Ovary (tissue), 10 donors: ENCODE measurements at regions of chr15 and their contacts with region 1.

Region 1: GRCh38 chr15:85750319-85750806 is 44.4 kb downstream of the KLHL25 start:
- DNase-seq: peak; percentile 74 to 84 (median 79)
- H3K4me3 ChIP-seq: peak overlapping the region; percentile 5
- H3K27ac ChIP-seq: peak overlapping the region; percentile 42 to 53
- H3K4me1 ChIP-seq: peaks cover 15% of the 10 kb centered on the region
- H3K27me3 ChIP-seq: no peaks in the 10 kb centered on the region
- CTCF ChIP-seq: no peak
- EP300 ChIP-seq: no peak
- POLR2A ChIP-seq: no peak

Region 2: DNA sequence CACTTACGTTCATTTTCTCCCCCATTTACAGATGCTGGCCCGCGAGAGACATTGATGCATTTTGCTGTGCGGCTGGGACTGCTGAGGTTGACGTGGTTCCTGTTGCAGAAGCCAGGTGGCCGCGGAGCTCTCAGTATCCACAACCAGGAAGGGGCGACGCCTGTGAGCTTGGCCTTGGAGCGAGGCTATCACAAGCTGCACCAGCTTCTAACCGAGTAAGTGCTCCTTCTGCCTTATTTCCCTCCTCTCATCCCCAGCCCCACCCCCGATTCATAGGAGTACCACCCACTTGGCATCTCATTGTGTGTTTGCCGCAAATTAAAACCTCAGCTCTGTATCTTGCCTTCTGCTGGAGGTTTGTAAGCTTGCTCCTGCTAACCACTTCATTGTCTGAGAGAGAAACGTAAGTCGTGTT is 206.6 kb before region 1 on chr15:
- intact Hi-C with region 1: no loop called
- DNase-seq: peak; percentile 66 to 77 (median 73)
- H3K4me3 ChIP-seq: no peak overlapping the region
- H3K27ac ChIP-seq: no peak overlapping the region
- H3K4me1 ChIP-seq: no peaks in the 10 kb centered on the region
- H3K27me3 ChIP-seq: no peaks in the 10 kb centered on the region
- CTCF ChIP-seq: peak; percentile 20 to 49 (median 27)
- EP300 ChIP-seq: no peak
- POLR2A ChIP-seq: no peak

Region 3: DNA sequence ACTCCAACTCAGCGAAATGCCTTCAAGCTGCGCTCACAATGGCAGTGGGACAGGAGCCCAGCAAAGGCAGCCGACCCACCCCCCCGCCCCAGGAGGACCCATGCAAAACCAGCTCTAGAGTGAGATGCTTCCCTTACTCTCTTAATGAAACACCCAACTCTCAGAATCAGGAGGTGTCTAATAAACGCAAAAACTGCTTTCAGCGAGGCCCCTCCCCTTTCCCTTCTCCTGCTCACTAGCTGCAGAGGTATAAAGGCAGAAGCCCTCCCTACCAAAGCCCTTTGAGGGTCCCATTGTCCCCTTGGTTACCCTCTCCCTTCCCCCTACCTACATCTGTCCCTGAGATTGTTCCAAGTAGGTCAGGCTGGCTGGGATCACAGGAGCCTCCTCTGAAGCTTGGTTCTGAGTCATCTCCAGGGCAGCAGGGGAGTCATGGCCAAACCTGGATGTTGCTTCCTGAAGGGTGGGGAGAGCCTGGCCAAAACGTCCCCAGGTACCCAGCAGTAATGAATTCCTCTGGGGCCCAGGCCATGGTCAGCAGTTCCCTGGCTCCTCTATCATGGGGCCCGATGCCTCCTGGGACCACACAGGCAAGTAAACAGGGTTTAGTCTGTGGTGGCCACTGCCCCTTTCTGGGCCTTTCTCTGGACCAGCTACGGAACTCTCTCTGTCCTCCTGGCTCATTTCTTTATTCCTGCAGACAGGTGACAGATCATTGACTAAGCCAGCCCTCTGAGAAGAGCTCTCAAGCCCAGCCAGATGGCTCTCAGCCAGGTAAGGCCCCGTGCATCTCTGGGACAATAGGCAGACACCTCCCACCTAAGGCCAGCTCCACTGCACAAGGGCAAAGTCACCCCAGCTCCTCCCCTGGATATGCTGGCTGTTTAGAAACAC is 35.8 kb after region 1 on chr15:
- intact Hi-C with region 1: loop called in 2 of 4 experiments (anchors 5 kb)
- DNase-seq: peak in 3 of 5 donors; percentile 44 to 54 (median 46)
- H3K4me3 ChIP-seq: no peak overlapping the region
- H3K27ac ChIP-seq: no peak overlapping the region
- H3K4me1 ChIP-seq: peaks cover 14% of the 10 kb centered on the region
- H3K27me3 ChIP-seq: no peaks in the 10 kb centered on the region
- CTCF ChIP-seq: no peak
- EP300 ChIP-seq: no peak
- POLR2A ChIP-seq: no peak

Region 4: DNA sequence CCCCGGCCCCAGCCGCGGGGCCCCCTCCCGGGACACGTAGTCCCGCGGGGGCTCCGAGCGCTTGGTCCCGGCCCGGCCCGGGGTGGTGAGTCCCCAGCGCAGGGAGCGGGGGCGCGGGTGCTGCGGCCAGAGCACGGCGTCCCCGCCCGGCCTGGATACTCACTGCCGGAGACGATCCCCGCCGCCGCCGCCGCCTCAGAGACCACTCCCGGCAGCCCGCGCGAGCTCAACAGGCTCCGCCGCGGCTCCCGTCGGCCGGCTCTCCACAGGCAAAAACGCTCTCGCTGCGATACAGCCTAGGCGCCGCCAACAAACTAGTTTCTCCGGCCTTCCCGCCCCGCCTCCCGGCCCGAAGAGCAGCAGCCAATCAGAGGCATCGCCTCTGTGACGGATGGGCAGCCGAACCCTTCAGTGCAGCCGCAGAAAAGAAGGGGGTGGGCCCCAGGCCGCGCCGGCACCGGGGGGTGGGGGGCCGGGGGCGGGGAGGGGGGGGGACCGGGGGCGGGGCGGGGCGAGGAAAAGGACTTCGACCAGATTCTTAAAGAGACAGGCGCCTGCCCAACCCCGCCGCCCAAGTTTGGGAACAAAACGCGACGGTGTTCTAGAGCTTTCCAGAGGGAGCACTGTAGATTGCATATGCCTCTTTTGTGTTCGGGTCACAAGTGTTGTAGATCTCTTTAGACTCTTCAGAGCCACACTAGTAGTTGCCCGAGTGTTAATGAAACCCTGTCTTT is 44.4 kb after region 1 on chr15 and contains the start of gene KLHL25:
- intact Hi-C with region 1: loop called in 2 of 4 experiments (anchors 5 kb)
- DNase-seq: peak; percentile 93 to 95 (median 94)
- H3K4me3 ChIP-seq: peak within 1 kb of the TSS; percentile 96
- H3K27ac ChIP-seq: peak within 1 kb of the TSS; percentile 47 to 85
- H3K4me1 ChIP-seq: peaks cover 5% of the 10 kb centered on the region
- H3K27me3 ChIP-seq: no peaks in the 10 kb centered on the region
- CTCF ChIP-seq: peak in 1 of 3 donors; percentile 13
- EP300 ChIP-seq: no peak
- POLR2A ChIP-seq: peak; percentile 71
- total RNA-seq, gene KLHL25: 5.3 to 9.6 (median 7.1) TPM

Region 5: DNA sequence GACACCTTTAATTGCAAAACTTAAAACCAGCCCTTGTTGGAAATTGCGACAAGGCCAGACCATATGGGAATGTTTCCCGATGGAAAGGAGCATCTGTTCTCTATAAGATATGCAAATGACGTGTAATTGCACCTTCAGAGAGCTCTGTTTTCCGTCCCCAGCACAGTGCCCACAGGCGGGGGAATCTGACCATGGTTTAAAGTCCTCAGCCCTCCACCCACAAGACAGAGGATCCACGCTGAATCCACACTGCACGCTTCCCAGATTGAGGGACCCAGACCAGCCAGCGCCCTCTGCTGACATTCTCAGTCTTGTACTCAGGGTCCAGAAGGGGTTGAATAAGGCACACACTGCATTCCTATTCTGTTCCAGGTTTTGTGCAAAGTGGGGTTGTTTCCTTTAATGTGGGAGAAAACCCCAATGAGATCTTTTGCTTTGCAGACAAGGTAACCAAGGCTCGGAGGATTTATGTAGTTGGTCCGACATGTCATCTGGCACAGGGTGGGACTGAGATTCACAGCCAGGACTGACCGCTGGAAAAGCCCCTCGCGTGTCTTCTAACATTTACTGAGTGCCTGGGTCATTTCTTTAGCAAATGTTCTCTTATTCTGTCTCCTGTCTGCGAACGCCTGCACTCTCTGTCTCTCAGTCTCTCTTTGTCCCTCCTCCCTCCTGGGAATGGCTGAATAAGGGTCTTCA is 81.2 kb after region 1 on chr15:
- intact Hi-C with region 1: loop called in 1 of 4 experiments (anchors 5 kb)
- DNase-seq: peak; percentile 69 to 82 (median 77)
- H3K4me3 ChIP-seq: no peak overlapping the region
- H3K27ac ChIP-seq: no peak overlapping the region
- H3K4me1 ChIP-seq: no peaks in the 10 kb centered on the region
- H3K27me3 ChIP-seq: no peaks in the 10 kb centered on the region
- CTCF ChIP-seq: peak; percentile 49 to 75 (median 52)
- EP300 ChIP-seq: no peak
- POLR2A ChIP-seq: no peak

Region 6: DNA sequence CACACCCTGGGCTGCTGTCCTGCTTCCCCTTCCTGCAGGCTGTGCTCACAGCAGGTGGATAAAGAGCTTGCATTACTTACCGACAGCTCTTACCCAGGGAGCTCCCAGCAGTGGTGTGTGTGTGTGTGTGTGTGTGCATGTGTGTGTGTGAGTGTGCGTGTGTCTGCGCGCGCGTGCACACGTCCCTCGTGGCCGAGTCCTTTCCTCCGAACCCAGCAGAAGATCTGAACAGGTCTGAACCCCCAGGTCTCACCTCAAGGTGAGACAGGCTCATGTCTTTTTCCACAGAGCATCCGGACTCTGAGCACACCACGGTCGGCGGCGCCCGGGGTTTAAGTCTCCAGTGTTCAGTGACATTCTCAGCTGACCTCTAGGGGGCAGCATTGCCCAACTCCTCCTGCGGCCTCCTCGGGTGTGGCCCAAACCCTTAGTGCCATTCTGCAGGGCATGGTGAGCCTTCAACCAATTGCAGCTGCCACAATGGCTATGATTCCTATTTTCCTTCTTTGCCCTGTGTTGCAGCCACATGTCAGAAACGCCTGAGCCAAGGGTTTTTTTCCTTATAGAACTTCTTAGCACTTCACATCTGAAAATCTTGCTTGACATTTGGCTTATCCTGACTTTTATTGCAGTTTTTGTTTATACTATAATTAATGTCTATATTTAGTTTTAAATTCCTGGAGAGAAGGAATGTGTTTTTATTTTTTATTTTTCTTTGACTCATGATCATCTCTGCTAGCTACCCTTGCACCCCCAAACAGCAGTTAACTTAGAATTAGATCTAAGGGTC is 108.4 kb after region 1 on chr15:
- intact Hi-C with region 1: no loop called
- DNase-seq: peak in 4 of 5 donors; percentile 18 to 53 (median 38)
- H3K4me3 ChIP-seq: no peak overlapping the region
- H3K27ac ChIP-seq: no peak overlapping the region
- H3K4me1 ChIP-seq: no peaks in the 10 kb centered on the region
- H3K27me3 ChIP-seq: no peaks in the 10 kb centered on the region
- CTCF ChIP-seq: no peak
- EP300 ChIP-seq: no peak
- POLR2A ChIP-seq: no peak

Region 7: DNA sequence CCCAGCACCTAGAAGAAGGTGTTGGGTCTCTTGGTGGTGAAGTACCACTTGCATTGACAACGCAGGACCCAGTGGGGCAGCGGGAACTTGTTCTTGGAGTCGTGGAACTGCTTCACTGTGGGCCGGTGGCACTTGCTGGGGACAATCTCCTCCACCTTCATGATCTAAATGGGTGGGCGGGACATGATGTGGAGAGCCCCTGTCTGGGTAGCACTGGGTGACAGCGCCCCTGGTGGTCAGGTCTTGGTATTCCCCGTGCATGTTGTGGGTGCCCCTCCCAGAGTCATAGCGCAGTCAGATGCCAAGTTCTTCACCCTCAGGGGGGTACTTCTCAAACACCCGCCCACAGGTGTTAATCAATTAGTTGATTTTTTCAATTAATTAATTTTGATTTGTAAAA is 389.5 kb after region 1 on chr15:
- intact Hi-C with region 1: no loop called
- DNase-seq: no peak
- H3K4me3 ChIP-seq: no peak overlapping the region
- H3K27ac ChIP-seq: no peak overlapping the region
- H3K4me1 ChIP-seq: no peaks in the 10 kb centered on the region
- H3K27me3 ChIP-seq: no peaks in the 10 kb centered on the region
- CTCF ChIP-seq: no peak
- EP300 ChIP-seq: no peak
- POLR2A ChIP-seq: no peak